CD8-positive, alpha-beta memory T cell (primary cell): ENCODE measurements at regions of chr5 and their contacts with region 1.

Region 1: GRCh38 chr5:179623003-179623880 is at the start of gene HNRNPH1:
- DNase-seq: peak; percentile 97 to 100 (median 99)
- H3K4me3 ChIP-seq: peak within 1 kb of the TSS; percentile 73
- H3K4me3 Mint-ChIP-seq: peak within 1 kb of the TSS; percentile 90 to 99 (median 97)
- H3K27ac ChIP-seq: peak within 1 kb of the TSS; percentile 97
- H3K27ac Mint-ChIP-seq: peak within 1 kb of the TSS; percentile 95 to 100 (median 99)
- H3K4me1 ChIP-seq: peaks cover 50% of the 10 kb centered on the region
- H3K4me1 Mint-ChIP-seq: peaks cover 50 to 57% (median 51%) of the 10 kb centered on the region in 3 donors
- H3K27me3 ChIP-seq: no peaks in the 10 kb centered on the region
- H3K27me3 Mint-ChIP-seq: peaks cover 0 to 14% of the 10 kb centered on the region in 2 donors
- total RNA-seq, gene HNRNPH1: 929 to 961 TPM

Region 2: GRCh38 chr5:179559284-179560252 is 63.7 kb before region 1 on chr5:
- CTCF ChIA-PET with region 1: interaction called, 3 read pairs
- POLR2A ChIA-PET with region 1: interaction called, 22 read pairs
- DNase-seq: peak; percentile 81 to 92 (median 87)
- H3K4me3 ChIP-seq: peak overlapping the region; percentile 95
- H3K4me3 Mint-ChIP-seq: peak overlapping the region; percentile 78 to 96 (median 87)
- H3K27ac ChIP-seq: peak overlapping the region; percentile 58
- H3K27ac Mint-ChIP-seq: peak overlapping the region; percentile 82 to 96 (median 85)
- H3K4me1 ChIP-seq: peaks cover 13% of the 10 kb centered on the region
- H3K4me1 Mint-ChIP-seq: peaks cover 14 to 34% (median 23%) of the 10 kb centered on the region in 3 donors
- H3K27me3 ChIP-seq: no peaks in the 10 kb centered on the region
- H3K27me3 Mint-ChIP-seq: no peaks in the 10 kb centered on the region

Region 3: DNA sequence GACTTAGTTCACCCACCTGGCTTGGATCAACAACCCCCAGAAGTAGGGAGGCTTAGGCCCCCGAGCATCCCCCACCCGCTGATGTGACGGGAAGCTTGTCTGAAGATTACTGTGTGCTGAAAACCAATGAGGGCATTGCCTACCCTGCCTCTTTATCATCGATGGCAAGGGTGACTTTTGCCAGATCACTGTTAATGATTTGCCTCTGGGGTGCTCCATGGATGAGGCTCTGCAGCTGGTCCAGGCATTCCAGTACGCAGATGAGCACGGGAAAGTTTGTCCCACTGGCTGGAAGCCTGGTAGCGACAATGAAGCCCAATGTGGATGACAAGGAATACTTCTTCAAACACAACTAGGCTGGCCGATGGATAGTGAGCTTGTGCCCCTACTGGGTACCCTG is 50.9 kb before region 1 on chr5:
- CTCF ChIA-PET with region 1: no interaction called
- POLR2A ChIA-PET with region 1: no interaction called
- DNase-seq: no peak
- H3K4me3 ChIP-seq: no peak overlapping the region
- H3K4me3 Mint-ChIP-seq: no peak overlapping the region
- H3K27ac ChIP-seq: no peak overlapping the region
- H3K27ac Mint-ChIP-seq: peak overlapping the region in 1 of 8 donors; percentile 19
- H3K4me1 ChIP-seq: no peaks in the 10 kb centered on the region
- H3K4me1 Mint-ChIP-seq: peaks cover 0 to 2% (median 0%) of the 10 kb centered on the region in 3 donors
- H3K27me3 ChIP-seq: no peaks in the 10 kb centered on the region
- H3K27me3 Mint-ChIP-seq: no peaks in the 10 kb centered on the region

Region 4: GRCh38 chr5:179678223-179679013 is 55.2 kb after region 1 on chr5:
- CTCF ChIA-PET with region 1: interaction called, 10 read pairs
- POLR2A ChIA-PET with region 1: interaction called, 23 read pairs
- DNase-seq: peak; percentile 89 to 94 (median 93)
- H3K4me3 ChIP-seq: peak overlapping the region; percentile 97
- H3K4me3 Mint-ChIP-seq: peak overlapping the region; percentile 88 to 99 (median 96)
- H3K27ac ChIP-seq: peak overlapping the region; percentile 91
- H3K27ac Mint-ChIP-seq: peak overlapping the region; percentile 87 to 98 (median 97)
- H3K4me1 ChIP-seq: peaks cover 14% of the 10 kb centered on the region
- H3K4me1 Mint-ChIP-seq: peaks cover 25 to 41% (median 27%) of the 10 kb centered on the region in 3 donors
- H3K27me3 ChIP-seq: no peaks in the 10 kb centered on the region
- H3K27me3 Mint-ChIP-seq: no peaks in the 10 kb centered on the region

Region 5: DNA sequence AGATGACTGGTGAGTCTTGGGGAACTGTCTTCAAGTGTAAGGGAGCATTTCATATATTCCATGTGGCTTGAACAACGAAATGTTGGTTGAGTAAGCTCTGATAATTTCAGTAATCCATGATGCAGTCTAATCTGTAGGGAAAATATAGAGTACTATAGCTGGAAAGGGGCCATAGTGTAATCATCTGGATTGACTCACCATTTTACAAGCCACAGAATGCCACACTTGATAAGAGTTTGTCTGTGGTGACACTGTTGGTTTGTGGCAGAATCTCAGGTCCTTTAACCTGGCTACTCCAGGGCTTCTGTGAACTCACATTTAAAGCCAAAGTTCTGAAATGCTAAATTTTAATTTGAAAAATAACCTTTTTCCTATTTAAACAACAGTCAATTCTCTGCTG is 93.0 kb after region 1 on chr5:
- CTCF ChIA-PET with region 1: no interaction called
- POLR2A ChIA-PET with region 1: no interaction called
- DNase-seq: no peak
- H3K4me3 ChIP-seq: no peak overlapping the region
- H3K4me3 Mint-ChIP-seq: no peak overlapping the region
- H3K27ac ChIP-seq: no peak overlapping the region
- H3K27ac Mint-ChIP-seq: peak overlapping the region in 4 of 8 donors; percentile 21 to 83 (median 72)
- H3K4me1 ChIP-seq: no peaks in the 10 kb centered on the region
- H3K4me1 Mint-ChIP-seq: peaks cover 0 to 10% (median 8%) of the 10 kb centered on the region in 3 donors
- H3K27me3 ChIP-seq: no peaks in the 10 kb centered on the region
- H3K27me3 Mint-ChIP-seq: no peaks in the 10 kb centered on the region

Region 6: DNA sequence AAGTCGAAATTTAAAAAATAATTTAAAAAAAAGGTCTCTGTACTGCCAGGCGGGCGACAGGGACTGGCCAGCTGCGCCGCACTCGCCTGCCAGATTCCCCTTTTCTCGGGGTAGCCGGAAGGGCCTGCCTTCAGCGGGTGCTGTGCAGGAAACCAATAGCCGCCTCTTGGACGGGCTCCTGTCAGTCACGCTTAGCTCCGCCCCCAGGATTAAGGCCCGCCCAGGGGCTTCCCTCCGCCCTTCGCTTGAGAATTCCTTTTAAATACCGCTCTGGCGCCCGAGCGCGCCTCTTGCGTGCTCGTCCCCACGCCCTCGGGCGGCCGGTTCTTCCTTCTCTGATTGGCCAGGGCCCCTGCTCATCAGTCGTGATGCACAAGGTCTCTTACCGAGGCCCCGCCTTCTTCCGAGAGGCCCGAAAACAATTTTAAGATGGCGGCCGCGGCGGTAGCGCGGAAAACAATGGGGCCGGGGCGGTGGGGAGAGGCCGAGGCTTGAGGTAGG is 109.2 kb after region 1 on chr5 and contains the start of gene MAML1:
- CTCF ChIA-PET with region 1: interaction called, 3 read pairs
- POLR2A ChIA-PET with region 1: interaction called, 16 read pairs
- DNase-seq: peak; percentile 99 to 100 (median 99)
- H3K4me3 ChIP-seq: peak within 1 kb of the TSS; percentile 75
- H3K4me3 Mint-ChIP-seq: peak within 1 kb of the TSS; percentile 92 to 99 (median 95)
- H3K27ac ChIP-seq: peak within 1 kb of the TSS; percentile 89
- H3K27ac Mint-ChIP-seq: peak within 1 kb of the TSS; percentile 94 to 98 (median 96)
- H3K4me1 ChIP-seq: peaks cover 34% of the 10 kb centered on the region
- H3K4me1 Mint-ChIP-seq: peaks cover 35 to 49% (median 46%) of the 10 kb centered on the region in 3 donors
- H3K27me3 ChIP-seq: no peaks in the 10 kb centered on the region
- H3K27me3 Mint-ChIP-seq: no peaks in the 10 kb centered on the region
- total RNA-seq, gene MAML1: 30.4 to 30.9 TPM